Left ventricle myocardium inferior (tissue), 1 donor: ENCODE measurements at regions of chr2 and their contacts with region 1.

Region 1: DNA sequence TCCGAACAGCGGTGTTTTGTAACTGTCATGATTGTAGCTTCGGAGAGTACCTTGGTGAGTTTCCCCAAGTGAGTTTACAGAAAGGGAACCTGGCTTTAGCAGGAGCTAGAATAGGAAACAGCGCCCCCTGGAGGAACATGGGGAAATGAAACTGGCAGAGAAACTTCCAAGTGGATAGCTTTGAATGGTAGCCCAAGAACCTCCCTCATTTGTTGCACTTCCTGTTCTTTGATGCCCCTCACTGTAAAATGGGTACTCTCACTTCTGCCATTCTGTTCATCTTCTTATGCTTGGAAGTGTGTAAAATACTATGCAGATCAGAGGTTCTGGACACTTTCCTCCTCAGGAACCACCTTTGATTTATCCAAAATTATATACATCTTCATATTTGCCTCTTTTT is 36.2 kb downstream of the CHST10 start:
- DNase-seq: peak; percentile 66
- H3K4me3 ChIP-seq: no peak overlapping the region
- H3K27ac ChIP-seq: no peak overlapping the region
- H3K4me1 ChIP-seq: no peaks in the 10 kb centered on the region
- H3K27me3 ChIP-seq: no peaks in the 10 kb centered on the region
- CTCF ChIP-seq: peak; percentile 89

Region 2: GRCh38 chr2:99489761-99490622 is 891.2 kb before region 1 on chr2 and contains the start of gene REV1:
- intact Hi-C with region 1: no loop called
- DNase-seq: peak; percentile 90
- H3K4me3 ChIP-seq: peak within 1 kb of the TSS; percentile 92
- H3K27ac ChIP-seq: peak within 1 kb of the TSS; percentile 99
- H3K4me1 ChIP-seq: peaks cover 51% of the 10 kb centered on the region
- H3K27me3 ChIP-seq: no peaks in the 10 kb centered on the region
- CTCF ChIP-seq: peak; percentile 83
- total RNA-seq, gene REV1: 42.8 TPM

Region 3: DNA sequence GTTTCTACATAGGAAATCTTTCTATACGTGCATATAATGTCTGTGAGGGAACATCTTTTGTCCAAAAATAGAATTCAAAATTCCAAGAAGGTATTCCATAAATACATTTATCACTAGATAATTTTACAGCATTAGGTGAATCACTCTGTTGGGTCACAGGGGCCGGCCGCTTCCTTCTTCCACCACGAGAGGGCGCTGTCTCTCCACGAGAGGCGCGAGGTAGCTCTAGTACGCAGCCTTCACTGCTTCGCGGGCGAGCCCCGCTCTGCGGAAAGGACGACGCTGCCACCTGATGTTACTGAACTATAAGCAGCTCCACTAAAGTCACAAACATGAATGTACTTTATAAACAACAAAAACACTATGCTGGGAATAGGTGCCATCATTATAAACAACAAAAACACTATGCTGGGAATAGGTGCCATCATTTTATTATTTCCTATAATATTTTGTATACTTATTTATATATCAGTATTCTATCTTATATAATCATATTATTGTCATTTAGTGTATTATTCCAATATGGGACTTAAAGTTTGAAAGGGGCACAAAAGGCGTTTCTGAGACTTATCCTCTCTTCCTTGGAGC is 822.1 kb before region 1 on chr2:
- intact Hi-C with region 1: no loop called
- DNase-seq: peak; percentile 88
- H3K4me3 ChIP-seq: no peak overlapping the region
- H3K27ac ChIP-seq: no peak overlapping the region
- H3K4me1 ChIP-seq: no peaks in the 10 kb centered on the region
- H3K27me3 ChIP-seq: no peaks in the 10 kb centered on the region
- CTCF ChIP-seq: peak; percentile 100

Region 4: GRCh38 chr2:100262555-100263320 is 118.5 kb before region 1 on chr2:
- intact Hi-C with region 1: loop called (anchors 2 kb)
- DNase-seq: peak; percentile 69
- H3K4me3 ChIP-seq: no peak overlapping the region
- H3K27ac ChIP-seq: no peak overlapping the region
- H3K4me1 ChIP-seq: peaks cover under 1% of the 10 kb centered on the region
- H3K27me3 ChIP-seq: peaks cover 6% of the 10 kb centered on the region
- CTCF ChIP-seq: peak; percentile 98

Region 5: GRCh38 chr2:100321181-100321865 is 59.9 kb before region 1 on chr2:
- intact Hi-C with region 1: no loop called
- DNase-seq: peak; percentile 25
- H3K4me3 ChIP-seq: peak overlapping the region; percentile 72
- H3K27ac ChIP-seq: peak overlapping the region; percentile 87
- H3K4me1 ChIP-seq: peaks cover 31% of the 10 kb centered on the region
- H3K27me3 ChIP-seq: peaks cover 41% of the 10 kb centered on the region
- CTCF ChIP-seq: peak; percentile 53

Region 6: DNA sequence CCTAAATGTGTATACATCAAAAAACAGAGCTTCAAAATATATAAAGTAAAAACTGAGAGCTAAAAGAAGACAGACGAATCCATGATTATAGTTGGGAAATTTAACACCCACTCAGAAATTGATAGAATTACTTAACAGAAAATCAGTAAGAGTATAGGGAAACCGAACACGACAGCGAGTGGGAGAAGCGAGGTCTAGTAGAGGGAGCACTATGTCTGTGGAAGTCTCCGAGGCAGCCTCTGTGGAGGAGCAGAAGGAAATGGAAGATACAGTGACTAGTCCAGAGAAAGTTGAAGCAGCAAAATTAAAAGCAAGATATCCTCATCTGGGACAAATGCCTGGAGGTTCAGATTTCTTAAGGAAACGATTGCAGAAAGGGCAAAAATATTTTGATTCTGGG is 127.8 kb after region 1 on chr2:
- intact Hi-C with region 1: no loop called
- DNase-seq: no peak
- H3K4me3 ChIP-seq: no peak overlapping the region
- H3K27ac ChIP-seq: no peak overlapping the region
- H3K4me1 ChIP-seq: no peaks in the 10 kb centered on the region
- H3K27me3 ChIP-seq: no peaks in the 10 kb centered on the region
- CTCF ChIP-seq: no peak